GM13977 (cell line): ENCODE measurements at regions of chr6 and their contacts with region 1.

Region 1: GRCh38 chr6:137944793-137945498 is 77.9 kb downstream of the TNFAIP3 start:
- DNase-seq: no peak
- CTCF ChIP-seq: peak; percentile 73

Region 2: DNA sequence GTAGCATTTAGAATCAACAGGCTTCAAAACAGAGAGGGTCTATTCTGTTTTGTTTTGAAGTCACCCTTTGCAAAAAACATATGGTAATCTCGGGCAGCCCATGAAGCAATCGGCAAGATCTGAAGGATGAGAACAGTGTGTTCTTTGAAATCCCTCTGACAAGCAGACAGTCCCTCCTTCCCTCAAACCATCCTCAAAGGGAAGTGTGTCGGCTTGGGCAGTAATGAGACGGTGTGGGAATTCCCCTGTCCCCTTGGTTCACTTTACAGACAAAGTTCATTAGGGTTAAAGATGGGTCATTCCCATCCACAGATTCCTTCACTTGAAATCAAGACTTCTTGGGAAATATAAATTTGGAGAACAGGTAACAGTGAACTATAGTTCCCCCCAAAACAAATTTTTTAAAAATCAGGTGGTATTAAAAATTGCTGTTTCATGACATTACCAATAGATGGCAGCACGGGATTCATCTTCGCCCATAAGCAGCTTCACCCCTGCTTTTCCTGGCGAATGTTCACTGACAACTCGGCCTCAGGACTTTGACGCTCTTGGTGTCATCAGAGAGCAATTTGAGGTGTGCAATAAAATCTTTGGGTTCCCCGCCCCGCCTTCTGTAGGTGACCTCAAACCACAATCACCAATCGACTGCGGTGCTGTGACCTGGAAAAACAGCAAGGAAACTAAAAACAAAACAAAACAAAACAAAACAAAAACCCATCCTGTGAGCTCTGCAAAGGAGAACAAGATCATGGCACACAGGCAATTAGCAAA is 237.2 kb before region 1 on chr6:
- in situ Hi-C with region 1: loop called (anchors 5 kb)
- DNase-seq: peak; percentile 58
- CTCF ChIP-seq: peak; percentile 58

Region 3: GRCh38 chr6:137866914-137867684 is 77.8 kb before region 1 on chr6 and contains the start of gene TNFAIP3:
- in situ Hi-C with region 1: loop called (anchors 5 kb)
- DNase-seq: peak; percentile 94
- CTCF ChIP-seq: peak; percentile 89